ENCODE measurements at regions of chr12 and their contacts with region 1.

Region 1: GRCh38 chr12:52372216-52373154 is 5.2 kb upstream of the KRT85 start:
- H3K4me3 ChIP-seq: no peak overlapping the region
- H3K27ac ChIP-seq: no peak overlapping the region
- H3K4me1 ChIP-seq: no peaks in the 10 kb centered on the region
- CTCF ChIP-seq: peak; percentile 77

Region 2: GRCh38 chr12:52285851-52286530 is 86.5 kb before region 1 on chr12:
- CTCF ChIA-PET with region 1: no interaction called
- POLR2A ChIA-PET with region 1: no interaction called
- H3K4me3 ChIP-seq: no peak overlapping the region
- H3K27ac ChIP-seq: no peak overlapping the region
- H3K4me1 ChIP-seq: no peaks in the 10 kb centered on the region
- CTCF ChIP-seq: no peak

Region 3: DNA sequence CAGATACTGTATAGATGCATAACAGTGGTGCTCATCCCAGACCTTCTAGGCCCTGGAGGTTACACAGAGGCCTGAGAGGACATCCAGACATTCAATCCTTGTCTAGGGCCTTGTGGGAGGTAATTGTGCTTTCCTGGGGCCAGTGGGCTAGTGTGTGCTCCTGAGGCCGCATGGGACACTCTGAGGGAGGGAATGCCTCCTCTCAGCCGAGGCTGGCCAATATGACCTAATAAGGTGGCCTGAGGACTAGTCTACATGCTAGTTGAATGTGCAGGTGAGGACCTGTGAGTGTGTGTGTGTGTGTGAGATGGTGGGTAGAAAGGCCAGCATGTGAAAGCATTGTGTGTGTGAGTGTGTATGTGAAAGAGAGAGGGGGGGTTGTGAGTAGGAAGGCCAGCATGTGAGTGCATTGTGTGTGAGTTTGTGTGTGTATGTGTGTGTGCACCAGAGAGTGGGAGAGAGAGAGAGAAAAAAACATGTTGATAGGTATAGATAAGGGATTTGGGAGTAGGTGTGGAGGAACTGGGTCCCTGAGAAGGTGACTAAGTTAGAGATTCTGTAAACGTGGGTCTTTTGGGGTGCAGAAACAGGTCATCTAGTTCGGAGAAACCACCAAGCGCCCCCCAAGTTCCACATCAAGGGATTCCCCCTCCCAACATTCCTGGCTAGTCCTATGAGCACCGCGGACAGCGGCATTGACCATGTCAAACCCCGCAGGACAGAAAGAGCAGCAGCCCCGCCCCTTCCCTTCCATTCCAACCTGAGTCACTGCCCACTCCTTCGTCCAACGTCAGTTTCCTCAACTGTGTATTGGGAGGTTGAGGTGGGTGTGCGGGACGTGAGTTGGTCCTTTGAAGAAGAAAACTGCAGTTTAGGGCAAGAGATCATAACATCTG is 71.4 kb before region 1 on chr12:
- CTCF ChIA-PET with region 1: no interaction called
- POLR2A ChIA-PET with region 1: no interaction called
- H3K4me3 ChIP-seq: no peak overlapping the region
- H3K27ac ChIP-seq: no peak overlapping the region
- H3K4me1 ChIP-seq: no peaks in the 10 kb centered on the region
- CTCF ChIP-seq: no peak

Region 4: DNA sequence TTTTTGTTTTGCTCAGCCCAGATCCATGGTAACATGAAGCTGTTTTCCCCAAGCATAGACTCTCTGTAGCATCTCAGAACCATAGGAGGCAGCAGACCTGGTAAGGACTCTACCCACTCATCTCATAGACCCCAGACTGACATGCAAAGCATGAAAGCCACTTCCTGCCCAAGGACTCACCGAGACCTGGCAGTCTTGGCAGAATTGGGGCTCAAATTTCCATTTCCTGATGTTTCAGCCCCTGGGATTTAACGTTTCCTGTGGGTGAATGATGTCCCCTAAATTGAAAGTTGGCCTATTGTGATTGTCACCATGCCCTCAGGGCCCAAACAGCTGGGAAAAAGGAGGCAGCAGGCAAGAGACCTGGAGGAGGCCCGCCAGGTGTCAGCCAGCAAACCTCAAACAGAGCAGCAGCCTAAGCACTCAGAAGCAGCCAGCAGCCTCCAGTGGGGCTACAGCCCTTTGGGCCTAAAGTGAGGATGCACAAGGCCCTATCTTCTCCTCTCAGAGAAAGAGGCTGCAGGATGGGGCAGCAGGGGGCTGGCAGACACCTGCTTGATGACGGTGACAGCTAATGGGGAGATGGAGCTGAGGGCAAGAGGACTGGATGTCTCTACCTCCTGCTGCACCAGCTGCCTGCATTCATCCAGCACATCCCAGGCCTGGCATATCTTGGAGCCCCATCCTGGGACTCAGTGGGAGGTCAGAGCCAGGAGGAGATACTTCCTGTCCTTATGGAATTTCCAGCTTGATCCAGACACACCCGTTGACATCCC is 13.7 kb before region 1 on chr12:
- CTCF ChIA-PET with region 1: interaction called, 37 read pairs
- POLR2A ChIA-PET with region 1: no interaction called
- H3K4me3 ChIP-seq: no peak overlapping the region
- H3K27ac ChIP-seq: no peak overlapping the region
- H3K4me1 ChIP-seq: no peaks in the 10 kb centered on the region
- CTCF ChIP-seq: no peak

Region 5: DNA sequence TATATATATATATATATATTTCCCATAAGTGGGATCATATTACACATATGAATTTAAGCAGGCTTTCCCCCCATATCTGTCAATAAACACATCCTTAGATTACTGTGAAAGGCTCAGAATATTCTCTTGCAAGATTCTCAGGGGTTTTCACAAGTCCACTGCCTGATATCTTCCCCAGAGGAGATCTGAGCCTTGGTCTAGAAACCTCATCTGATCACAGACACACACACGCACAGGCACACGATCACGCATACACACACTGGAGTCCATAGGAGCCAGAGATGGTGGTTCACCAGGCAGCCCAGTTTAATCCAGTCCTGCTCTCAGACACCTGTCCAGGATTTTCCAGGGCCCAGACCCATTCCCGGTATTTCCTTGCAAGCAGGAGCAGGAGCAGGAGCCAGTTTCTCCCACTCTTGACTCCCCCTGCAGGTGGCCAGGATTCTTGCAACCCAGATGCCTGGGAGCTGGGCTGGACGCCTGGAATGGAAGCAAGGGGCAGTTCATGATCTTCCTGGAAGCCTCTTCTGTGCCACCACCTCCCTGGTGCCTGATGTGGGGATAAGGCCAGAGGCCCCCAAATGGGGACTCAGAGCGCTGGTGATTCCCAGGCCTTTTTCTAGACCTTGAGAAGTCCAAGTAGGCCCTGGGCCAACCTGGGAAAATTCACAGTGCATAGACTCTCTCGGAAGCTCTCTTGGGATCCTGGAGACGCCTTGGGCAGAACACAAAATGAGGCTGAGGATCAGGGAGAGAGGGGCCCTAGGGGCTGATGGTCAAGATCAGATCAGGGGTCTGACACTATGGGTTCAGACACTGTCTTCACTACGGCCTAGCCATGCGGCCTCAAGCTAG is 492.8 kb after region 1 on chr12:
- CTCF ChIA-PET with region 1: interaction called, 13 read pairs
- POLR2A ChIA-PET with region 1: no interaction called
- H3K4me3 ChIP-seq: no peak overlapping the region
- H3K27ac ChIP-seq: no peak overlapping the region
- H3K4me1 ChIP-seq: no peaks in the 10 kb centered on the region; the same call in 1 of the 2 replicates
- CTCF ChIP-seq: peak; percentile 68; the same call in 1 of the 2 replicates

Region 6: GRCh38 chr12:52870351-52871290 is 498.1 kb after region 1 on chr12:
- CTCF ChIA-PET with region 1: interaction called, 200 read pairs
- POLR2A ChIA-PET with region 1: no interaction called
- H3K4me3 ChIP-seq: no peak overlapping the region
- H3K27ac ChIP-seq: no peak overlapping the region
- H3K4me1 ChIP-seq: peaks cover 13% of the 10 kb centered on the region; the same call in 1 of the 2 replicates
- CTCF ChIP-seq: peak; percentile 84

Measured in HEK293 (cell line).